ENCODE measurements at regions of chr6 and their contacts with region 1.

Region 1: GRCh38 chr6:141403795-141404194 is 728.9 kb upstream of the GJE1 start:
- DNase-seq: no peak
- ATAC-seq: peak in 7 of 8 donors; percentile 20 to 70 (median 33)
- H3K4me3 ChIP-seq: peak overlapping the region in 9 of 10 donors; percentile 23 to 49 (median 37)
- H3K27ac ChIP-seq: peak overlapping the region; percentile 49 to 85 (median 80)
- H3K4me1 ChIP-seq: peaks cover 0 to 22% (median 8%) of the 10 kb centered on the region in 9 donors
- H3K27me3 ChIP-seq: no peaks in the 10 kb centered on the region
- CTCF ChIP-seq: no peak

Region 2: GRCh38 chr6:140774080-140774505 is 629.7 kb before region 1 on chr6:
- intact Hi-C with region 1: loop called in 1 of 10 experiments (anchors 10 kb)
- DNase-seq: peak in 1 of 2 donors; percentile 71
- ATAC-seq: peak; percentile 82 to 99 (median 98)
- H3K4me3 ChIP-seq: no peak overlapping the region
- H3K27ac ChIP-seq: peak overlapping the region in 9 of 10 donors; percentile 33 to 79 (median 65)
- H3K4me1 ChIP-seq: peaks cover 0 to 25% (median 11%) of the 10 kb centered on the region in 9 donors
- H3K27me3 ChIP-seq: no peaks in the 10 kb centered on the region
- CTCF ChIP-seq: no peak

Region 3: DNA sequence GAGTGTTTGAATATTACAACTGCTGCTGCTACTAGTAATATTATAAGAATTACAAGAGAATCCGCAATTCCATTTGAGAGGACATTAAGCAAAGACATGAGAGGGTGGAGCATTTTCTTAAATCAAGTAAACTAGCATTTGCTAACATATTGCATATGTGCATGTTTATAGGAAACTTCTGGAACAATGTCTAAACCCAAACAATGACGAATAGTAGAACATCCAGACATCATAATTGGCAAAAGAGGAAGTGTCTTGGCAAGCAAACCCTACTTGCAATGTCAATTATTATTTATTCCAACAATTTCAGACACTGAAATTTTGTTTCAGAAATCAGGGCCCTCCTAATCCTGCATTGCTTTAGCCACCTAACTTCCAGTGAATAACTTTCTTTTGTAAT is 426.4 kb before region 1 on chr6:
- intact Hi-C with region 1: no loop called
- DNase-seq: no peak
- ATAC-seq: no peak
- H3K4me3 ChIP-seq: no peak overlapping the region
- H3K27ac ChIP-seq: no peak overlapping the region
- H3K4me1 ChIP-seq: peaks cover 0 to 20% (median 10%) of the 10 kb centered on the region in 9 donors
- H3K27me3 ChIP-seq: no peaks in the 10 kb centered on the region
- CTCF ChIP-seq: no peak

Region 4: DNA sequence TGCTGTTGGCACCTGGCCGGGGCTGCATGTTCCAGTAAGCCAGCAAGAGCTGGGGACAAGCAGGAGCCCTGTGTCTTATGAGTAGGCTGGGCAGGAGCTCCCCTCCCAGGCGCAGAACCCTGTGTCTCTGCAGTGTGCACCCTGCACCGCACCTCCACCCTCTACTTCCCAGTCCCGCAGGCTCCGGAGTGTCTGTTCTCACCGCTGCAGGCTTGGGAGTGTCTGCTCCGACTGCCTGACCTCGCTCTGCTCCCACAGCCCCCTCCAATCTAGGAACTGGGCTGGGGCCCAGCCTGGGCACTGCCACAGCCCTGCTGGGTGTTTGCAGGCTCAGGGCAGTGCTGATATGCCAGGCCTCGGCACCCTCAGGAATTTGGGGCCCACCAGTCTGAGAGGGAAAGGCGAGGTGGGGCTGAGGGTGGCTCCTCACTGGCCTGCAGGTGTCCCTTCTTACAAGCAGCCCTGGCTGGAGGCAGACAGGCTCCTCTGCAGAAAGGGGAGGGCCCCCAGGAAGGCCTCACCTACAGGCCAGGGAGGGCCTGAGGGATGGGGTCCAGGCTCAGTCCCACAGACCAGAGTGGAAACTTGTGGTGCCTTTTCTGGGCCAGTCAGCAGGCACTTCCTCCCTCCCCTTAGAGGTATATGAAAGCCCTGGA is 142.7 kb before region 1 on chr6:
- intact Hi-C with region 1: loop called in 1 of 10 experiments (anchors 5 kb)
- DNase-seq: peak; percentile 33 to 44
- ATAC-seq: peak; percentile 79 to 97 (median 92)
- H3K4me3 ChIP-seq: no peak overlapping the region
- H3K27ac ChIP-seq: peak overlapping the region in 7 of 10 donors; percentile 28 to 61 (median 42)
- H3K4me1 ChIP-seq: peaks cover 0 to 15% (median 8%) of the 10 kb centered on the region in 9 donors
- H3K27me3 ChIP-seq: no peaks in the 10 kb centered on the region
- CTCF ChIP-seq: peak in 1 of 9 donors; percentile 4

Region 5: GRCh38 chr6:141359953-141360352 is 43.8 kb before region 1 on chr6:
- intact Hi-C with region 1: loop called in 2 of 10 experiments (anchors 2 to 5 kb)
- DNase-seq: peak in 1 of 2 donors; percentile 6
- ATAC-seq: peak; percentile 71 to 94 (median 84)
- H3K4me3 ChIP-seq: peak overlapping the region in 6 of 10 donors; percentile 4 to 25 (median 14)
- H3K27ac ChIP-seq: peak overlapping the region; percentile 17 to 69 (median 52)
- H3K4me1 ChIP-seq: peaks cover 0 to 20% (median 7%) of the 10 kb centered on the region in 9 donors
- H3K27me3 ChIP-seq: no peaks in the 10 kb centered on the region
- CTCF ChIP-seq: no peak

Region 6: DNA sequence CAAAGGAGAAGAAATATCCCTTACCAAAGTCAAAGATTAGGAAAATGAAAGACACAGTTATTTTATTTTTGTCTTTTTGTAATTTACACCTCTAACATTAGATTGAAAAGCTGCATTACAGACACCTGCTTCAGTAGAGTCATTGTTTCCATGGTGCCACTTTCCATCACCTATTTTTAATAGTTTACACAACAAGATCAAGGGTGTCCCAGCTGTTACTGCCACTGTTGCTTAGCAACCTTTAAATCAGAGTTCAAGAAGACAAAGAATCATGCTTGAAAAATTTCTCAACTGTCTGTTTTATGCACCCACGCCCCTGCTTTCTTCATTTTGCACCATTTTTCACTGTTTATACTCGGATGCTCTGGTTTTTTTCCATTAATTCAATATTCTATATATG is 60.7 kb after region 1 on chr6:
- intact Hi-C with region 1: loop called in 2 of 10 experiments (anchors 5 kb)
- DNase-seq: peak in 1 of 2 donors; percentile 21
- ATAC-seq: peak; percentile 70 to 92 (median 89)
- H3K4me3 ChIP-seq: no peak overlapping the region
- H3K27ac ChIP-seq: peak overlapping the region in 9 of 10 donors; percentile 24 to 86 (median 80)
- H3K4me1 ChIP-seq: peaks cover 0 to 27% (median 15%) of the 10 kb centered on the region in 9 donors
- H3K27me3 ChIP-seq: no peaks in the 10 kb centered on the region
- CTCF ChIP-seq: no peak

Region 7: DNA sequence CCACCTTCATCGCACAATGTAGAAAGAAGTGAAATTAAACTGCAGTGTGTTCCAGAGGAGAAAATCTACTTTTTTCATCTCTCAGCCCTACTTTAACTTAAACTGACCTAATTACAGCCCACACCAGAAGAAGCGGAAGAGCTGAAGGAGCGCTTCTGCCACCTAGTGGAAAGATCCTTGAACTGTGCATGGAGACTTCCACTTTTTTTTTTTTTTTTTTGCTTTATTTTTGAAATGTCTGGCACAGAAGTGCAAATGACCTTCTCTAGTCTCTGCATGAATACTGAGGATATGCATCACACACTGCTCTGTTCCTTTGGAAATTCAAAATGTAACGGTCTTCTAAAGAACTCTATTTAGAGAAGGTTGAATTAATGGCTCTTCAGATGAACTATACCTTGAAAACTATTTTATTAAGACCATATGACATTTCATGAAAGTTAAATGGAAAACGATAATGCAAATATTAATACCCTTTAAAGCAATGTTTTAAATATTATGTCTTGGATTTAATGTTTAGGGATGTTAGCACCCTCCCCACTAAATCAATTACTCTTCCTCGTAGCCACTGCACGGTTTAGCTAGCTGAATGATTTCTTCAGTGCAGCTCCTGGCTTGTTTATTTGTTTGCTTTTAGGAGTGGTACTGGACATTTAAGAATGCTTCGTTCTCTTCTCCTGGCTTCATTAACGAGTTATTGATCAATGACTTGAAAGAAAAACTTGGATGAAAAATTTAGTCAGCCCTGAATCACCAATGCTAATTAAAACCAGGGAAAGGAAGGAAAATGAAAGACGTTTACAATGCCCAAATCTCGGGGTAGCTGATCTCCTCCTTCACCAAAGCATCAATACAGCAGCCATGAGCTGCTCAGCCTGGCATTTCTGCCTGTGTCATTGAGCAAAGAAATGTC is 159.3 kb after region 1 on chr6:
- intact Hi-C with region 1: loop called in 3 of 10 experiments (anchors 5 kb)
- DNase-seq: peak; percentile 23 to 72
- ATAC-seq: peak; percentile 89 to 96 (median 94)
- H3K4me3 ChIP-seq: peak overlapping the region; percentile 14 to 53 (median 38)
- H3K27ac ChIP-seq: peak overlapping the region; percentile 63 to 91 (median 76)
- H3K4me1 ChIP-seq: peaks cover 0 to 23% (median 9%) of the 10 kb centered on the region in 9 donors
- H3K27me3 ChIP-seq: no peaks in the 10 kb centered on the region
- CTCF ChIP-seq: peak; percentile 83 to 92 (median 88)

Region 8: GRCh38 chr6:141726248-141726647 is 322.5 kb after region 1 on chr6:
- intact Hi-C with region 1: no loop called
- DNase-seq: no peak
- ATAC-seq: no peak
- H3K4me3 ChIP-seq: no peak overlapping the region
- H3K27ac ChIP-seq: no peak overlapping the region
- H3K4me1 ChIP-seq: no peaks in the 10 kb centered on the region
- H3K27me3 ChIP-seq: no peaks in the 10 kb centered on the region
- CTCF ChIP-seq: no peak